Common myeloid progenitor, CD34-positive (primary cell): ENCODE measurements at regions of chr3 and their contacts with region 1.

Region 1: GRCh38 chr3:57864853-57865252 is 108.7 kb downstream of the SLMAP start:
- DNase-seq: peak; percentile 12 to 47 (median 45)
- H3K4me3 ChIP-seq: no peak overlapping the region
- H3K27ac ChIP-seq: no peak overlapping the region
- H3K4me1 ChIP-seq: no peaks in the 10 kb centered on the region
- H3K27me3 ChIP-seq: no peaks in the 10 kb centered on the region

Region 2: DNA sequence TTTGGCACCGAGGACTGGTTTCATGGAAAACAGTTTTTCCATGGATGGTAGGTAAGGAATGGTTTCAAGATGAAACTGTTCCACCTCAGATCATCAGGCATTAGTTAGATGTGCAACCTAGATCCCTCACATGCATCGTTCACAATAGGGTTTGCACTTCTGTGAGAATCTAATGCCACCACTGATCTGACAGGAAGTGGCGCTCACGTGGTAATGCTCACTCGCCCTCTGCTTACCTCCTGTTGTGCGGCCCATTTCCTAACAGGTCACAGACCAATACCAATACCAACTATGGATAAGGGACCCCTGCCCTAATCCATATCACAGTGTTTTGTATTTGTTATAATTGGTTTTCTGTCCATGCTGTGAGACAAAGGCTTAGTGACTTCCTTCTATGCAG is 49.8 kb before region 1 on chr3:
- CTCF ChIA-PET with region 1: no interaction called
- POLR2A ChIA-PET with region 1: no interaction called
- DNase-seq: no peak
- H3K4me3 ChIP-seq: no peak overlapping the region
- H3K27ac ChIP-seq: no peak overlapping the region
- H3K4me1 ChIP-seq: peaks cover 0 to 14% (median 5%) of the 10 kb centered on the region in 4 experiments
- H3K27me3 ChIP-seq: no peaks in the 10 kb centered on the region

Region 3: GRCh38 chr3:57840473-57840872 is 24.4 kb before region 1 on chr3:
- CTCF ChIA-PET with region 1: no interaction called
- POLR2A ChIA-PET with region 1: no interaction called
- DNase-seq: peak in 2 of 3 donors; percentile 38 to 52
- H3K4me3 ChIP-seq: no peak overlapping the region
- H3K27ac ChIP-seq: no peak overlapping the region
- H3K4me1 ChIP-seq: no peaks in the 10 kb centered on the region
- H3K27me3 ChIP-seq: no peaks in the 10 kb centered on the region

Region 4: GRCh38 chr3:57852896-57853295 is 12.0 kb before region 1 on chr3:
- CTCF ChIA-PET with region 1: interaction called, 14 read pairs
- POLR2A ChIA-PET with region 1: interaction called, 4 read pairs
- DNase-seq: peak; percentile 9 to 21 (median 17)
- H3K4me3 ChIP-seq: no peak overlapping the region
- H3K27ac ChIP-seq: no peak overlapping the region
- H3K4me1 ChIP-seq: peaks cover 0 to 2% (median 0%) of the 10 kb centered on the region in 4 experiments
- H3K27me3 ChIP-seq: no peaks in the 10 kb centered on the region

Region 5: DNA sequence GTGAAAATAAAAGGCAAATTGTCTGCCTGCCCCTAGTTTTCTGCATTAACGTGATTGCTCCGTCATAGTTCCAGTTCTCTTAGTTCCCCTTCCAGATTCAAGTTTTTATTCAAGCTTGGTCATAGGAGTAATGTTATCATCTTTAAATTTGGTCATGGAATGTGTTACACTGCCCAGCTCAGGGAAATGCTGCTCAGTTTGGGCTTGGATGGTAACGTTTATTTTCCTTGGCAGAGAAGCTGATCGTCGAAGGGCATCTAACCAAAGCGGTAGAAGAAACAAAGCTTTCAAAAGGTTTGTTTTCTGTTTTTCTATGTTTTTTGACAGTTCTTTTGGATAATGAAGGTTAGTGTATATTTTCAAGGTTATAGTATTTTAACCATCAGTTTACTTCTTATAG is 25.0 kb after region 1 on chr3:
- CTCF ChIA-PET with region 1: no interaction called
- POLR2A ChIA-PET with region 1: no interaction called
- DNase-seq: no peak
- H3K4me3 ChIP-seq: no peak overlapping the region
- H3K27ac ChIP-seq: no peak overlapping the region
- H3K4me1 ChIP-seq: no peaks in the 10 kb centered on the region
- H3K27me3 ChIP-seq: no peaks in the 10 kb centered on the region

Region 6: DNA sequence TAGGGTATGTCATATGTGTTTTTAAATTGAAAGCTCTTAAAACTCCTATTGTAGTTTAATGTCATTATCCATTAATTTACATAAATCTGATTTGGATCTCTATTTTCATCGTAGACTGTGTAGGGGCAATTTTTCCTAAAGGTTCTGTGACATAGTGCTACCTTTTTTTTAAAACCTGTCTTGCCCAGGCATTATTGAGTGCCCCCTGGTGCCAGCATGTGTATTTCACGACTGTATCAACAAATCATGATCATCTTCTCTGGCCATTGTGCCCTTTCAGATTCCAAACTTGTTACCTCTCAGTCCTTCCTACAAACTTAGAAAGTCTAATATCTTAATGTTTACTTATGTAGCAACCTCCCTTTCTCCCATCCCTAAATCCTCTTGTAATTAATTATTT is 46.1 kb after region 1 on chr3:
- CTCF ChIA-PET with region 1: interaction called, 27 read pairs
- POLR2A ChIA-PET with region 1: no interaction called
- DNase-seq: peak; percentile 48 to 68 (median 66)
- H3K4me3 ChIP-seq: no peak overlapping the region
- H3K27ac ChIP-seq: no peak overlapping the region
- H3K4me1 ChIP-seq: no peaks in the 10 kb centered on the region
- H3K27me3 ChIP-seq: no peaks in the 10 kb centered on the region

Region 7: GRCh38 chr3:58093573-58094195 is 228.8 kb after region 1 on chr3:
- CTCF ChIA-PET with region 1: no interaction called
- POLR2A ChIA-PET with region 1: no interaction called
- DNase-seq: no peak
- H3K4me3 ChIP-seq: no peak overlapping the region
- H3K27ac ChIP-seq: no peak overlapping the region
- H3K4me1 ChIP-seq: no peaks in the 10 kb centered on the region
- H3K27me3 ChIP-seq: no peaks in the 10 kb centered on the region